Calu3 (cell line): ENCODE measurements at regions of chr5 and their contacts with region 1.

Region 1: GRCh38 chr5:74316064-74316679 is 324.4 kb downstream of the ENC1 start:
- DNase-seq: peak; percentile 83
- H3K4me3 Mint-ChIP-seq: no peak overlapping the region
- H3K27ac Mint-ChIP-seq: peak overlapping the region; percentile 90
- H3K4me1 Mint-ChIP-seq: peaks cover 57% of the 10 kb centered on the region
- H3K27me3 Mint-ChIP-seq: no peaks in the 10 kb centered on the region
- CTCF ChIP-seq: no peak

Region 2: DNA sequence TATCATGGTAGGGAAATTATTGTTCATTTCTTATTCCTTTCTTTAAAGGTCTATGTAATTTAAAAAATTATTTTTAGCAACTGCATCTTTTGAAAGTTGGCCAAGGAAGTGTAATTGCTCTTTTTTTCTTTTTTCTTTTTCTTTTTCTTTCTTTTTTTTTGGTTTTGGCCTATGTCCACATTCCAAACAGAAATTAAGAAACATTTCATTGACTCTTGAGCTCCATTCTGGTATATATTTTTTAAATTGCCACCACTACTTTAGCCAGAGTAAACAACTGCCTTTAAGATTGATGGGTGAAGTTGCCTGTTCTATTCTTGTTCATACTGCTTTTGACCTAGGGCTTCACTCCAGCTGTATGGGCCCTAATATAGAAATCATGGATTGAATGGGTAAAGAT is 1271.6 kb before region 1 on chr5:
- CTCF ChIA-PET with region 1: no interaction called
- intact Hi-C with region 1: no loop called
- DNase-seq: no peak
- H3K4me3 Mint-ChIP-seq: no peak overlapping the region
- H3K27ac Mint-ChIP-seq: no peak overlapping the region
- H3K4me1 Mint-ChIP-seq: no peaks in the 10 kb centered on the region
- H3K27me3 Mint-ChIP-seq: no peaks in the 10 kb centered on the region
- CTCF ChIP-seq: no peak

Region 3: GRCh38 chr5:74232281-74232680 is 83.9 kb before region 1 on chr5:
- CTCF ChIA-PET with region 1: no interaction called
- intact Hi-C with region 1: loop called (anchors 5 kb)
- DNase-seq: peak; percentile 70
- H3K4me3 Mint-ChIP-seq: no peak overlapping the region
- H3K27ac Mint-ChIP-seq: peak overlapping the region; percentile 63
- H3K4me1 Mint-ChIP-seq: peaks cover 43% of the 10 kb centered on the region
- H3K27me3 Mint-ChIP-seq: no peaks in the 10 kb centered on the region
- CTCF ChIP-seq: no peak

Region 4: DNA sequence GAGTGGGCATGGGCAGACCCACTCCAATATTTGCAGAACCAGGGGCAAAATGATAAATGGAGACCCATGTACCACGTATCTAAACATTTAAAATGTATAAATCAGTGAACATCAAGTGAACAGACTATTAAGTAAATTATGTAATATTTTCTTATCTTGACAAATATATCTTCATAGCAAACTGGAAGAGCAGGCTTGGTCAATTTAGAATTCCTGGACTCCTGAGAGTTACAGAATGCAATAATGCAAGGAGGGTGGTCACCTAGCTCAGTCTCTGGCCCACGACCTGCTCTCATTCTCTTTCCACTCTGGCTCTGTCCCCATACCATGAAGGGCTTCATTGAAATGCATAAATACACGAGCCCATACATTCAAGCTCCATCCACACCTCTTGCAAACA is 73.7 kb before region 1 on chr5:
- CTCF ChIA-PET with region 1: no interaction called
- intact Hi-C with region 1: no loop called
- DNase-seq: no peak
- H3K4me3 Mint-ChIP-seq: peak overlapping the region; percentile 5
- H3K27ac Mint-ChIP-seq: peak overlapping the region; percentile 73
- H3K4me1 Mint-ChIP-seq: peaks cover 44% of the 10 kb centered on the region
- H3K27me3 Mint-ChIP-seq: no peaks in the 10 kb centered on the region
- CTCF ChIP-seq: no peak

Region 5: DNA sequence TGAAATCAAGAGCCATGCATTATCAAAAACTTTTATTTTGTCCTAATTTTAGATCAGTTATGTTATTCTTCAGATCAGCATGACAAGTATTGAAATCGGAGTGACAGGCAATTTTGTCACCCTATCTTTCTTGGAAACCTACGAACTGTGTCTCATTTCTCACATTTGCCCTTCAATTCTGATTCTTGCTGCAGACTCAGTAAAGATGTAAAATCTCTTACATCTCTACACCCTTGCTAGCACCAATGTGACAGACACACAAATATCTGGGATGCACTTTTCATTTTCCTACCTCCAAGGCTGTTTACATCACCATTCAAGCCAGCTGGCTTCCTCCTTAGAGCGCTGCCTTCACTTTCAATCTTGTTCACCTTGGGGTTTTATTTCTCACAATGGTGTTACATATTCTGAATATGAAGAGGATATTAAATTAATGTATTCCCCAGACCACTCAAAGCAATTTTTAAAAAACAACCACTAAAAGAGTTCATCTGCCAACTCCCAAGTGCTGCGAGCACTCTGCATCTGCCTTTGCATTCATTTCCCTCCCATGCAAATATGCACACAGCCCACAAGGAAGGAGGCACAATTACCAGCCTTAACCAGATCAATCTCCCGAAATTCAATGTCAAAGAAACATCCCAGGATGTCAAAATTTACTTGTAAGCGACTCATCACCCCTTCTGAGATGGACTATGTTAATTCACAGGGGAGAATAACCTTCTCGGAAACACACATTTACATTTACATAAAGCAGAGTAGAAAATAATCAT is 160.1 kb after region 1 on chr5:
- CTCF ChIA-PET with region 1: no interaction called
- intact Hi-C with region 1: no loop called
- DNase-seq: no peak
- H3K4me3 Mint-ChIP-seq: no peak overlapping the region
- H3K27ac Mint-ChIP-seq: no peak overlapping the region
- H3K4me1 Mint-ChIP-seq: no peaks in the 10 kb centered on the region
- H3K27me3 Mint-ChIP-seq: no peaks in the 10 kb centered on the region
- CTCF ChIP-seq: no peak